ENCODE measurements at regions of chr11 and their contacts with region 1.

Region 1: GRCh38 chr11:61111786-61112517 is 9.7 kb downstream of the CD5 start:
- DNase-seq: no peak
- H3K4me3 ChIP-seq: no peak overlapping the region
- H3K27ac ChIP-seq: no peak overlapping the region
- H3K4me1 ChIP-seq: no peaks in the 10 kb centered on the region
- H3K27me3 ChIP-seq: no peaks in the 10 kb centered on the region
- CTCF ChIP-seq: no peak
- EP300 ChIP-seq: no peak
- POLR2A ChIP-seq: no peak

Region 2: GRCh38 chr11:61071208-61071681 is 40.7 kb before region 1 on chr11:
- intact Hi-C with region 1: loop called in 1 of 4 experiments (anchors 1 kb)
- DNase-seq: peak in 2 of 5 donors; percentile 20 to 37
- H3K4me3 ChIP-seq: no peak overlapping the region
- H3K27ac ChIP-seq: peak overlapping the region; percentile 45 to 95
- H3K4me1 ChIP-seq: peaks cover 17% of the 10 kb centered on the region
- H3K27me3 ChIP-seq: no peaks in the 10 kb centered on the region
- CTCF ChIP-seq: no peak
- EP300 ChIP-seq: no peak
- POLR2A ChIP-seq: no peak

Region 3: DNA sequence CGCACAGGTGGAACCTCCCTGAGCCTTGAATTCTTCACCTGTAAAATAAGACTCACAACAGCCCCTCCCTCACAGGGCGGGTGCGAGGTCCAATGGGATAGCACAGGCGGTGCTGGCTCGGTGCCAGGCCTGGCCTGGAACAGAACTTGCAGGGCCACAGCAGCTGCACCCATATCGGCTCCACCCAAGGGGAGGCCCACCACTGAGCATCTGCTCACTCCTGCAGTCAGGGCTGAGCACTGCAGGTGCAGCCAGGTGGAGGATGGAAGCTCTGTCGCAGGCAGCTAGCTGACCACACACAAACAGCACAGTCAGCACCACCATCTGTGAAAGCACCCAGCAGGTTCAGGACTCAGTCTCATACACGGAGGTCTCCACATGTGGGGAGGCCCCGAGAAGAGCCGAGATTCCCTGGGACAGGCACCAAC is 29.7 kb after region 1 on chr11:
- intact Hi-C with region 1: no loop called
- DNase-seq: peak in 1 of 5 donors; percentile 62
- H3K4me3 ChIP-seq: no peak overlapping the region
- H3K27ac ChIP-seq: no peak overlapping the region
- H3K4me1 ChIP-seq: peaks cover 9% of the 10 kb centered on the region
- H3K27me3 ChIP-seq: no peaks in the 10 kb centered on the region
- CTCF ChIP-seq: no peak
- EP300 ChIP-seq: no peak
- POLR2A ChIP-seq: no peak